Naive thymus-derived CD4-positive, alpha-beta T cell (primary cell): ENCODE measurements at regions of chr14 and their contacts with region 1.

Region 1: GRCh38 chr14:38056270-38056669 is 151.4 kb upstream of the SSTR1 start:
- DNase-seq: no peak
- ATAC-seq: peak; percentile 53
- H3K4me3 ChIP-seq: no peak overlapping the region
- H3K4me3 Mint-ChIP-seq: no peak overlapping the region
- H3K27ac ChIP-seq: no peak overlapping the region
- H3K27ac Mint-ChIP-seq: no peak overlapping the region
- H3K4me1 ChIP-seq: peaks cover 0 to 7% of the 10 kb centered on the region in 2 donors
- H3K4me1 Mint-ChIP-seq: peaks cover 0 to 27% (median 13%) of the 10 kb centered on the region in 7 donors
- H3K27me3 ChIP-seq: no peaks in the 10 kb centered on the region
- H3K27me3 Mint-ChIP-seq: no peaks in the 10 kb centered on the region

Region 2: DNA sequence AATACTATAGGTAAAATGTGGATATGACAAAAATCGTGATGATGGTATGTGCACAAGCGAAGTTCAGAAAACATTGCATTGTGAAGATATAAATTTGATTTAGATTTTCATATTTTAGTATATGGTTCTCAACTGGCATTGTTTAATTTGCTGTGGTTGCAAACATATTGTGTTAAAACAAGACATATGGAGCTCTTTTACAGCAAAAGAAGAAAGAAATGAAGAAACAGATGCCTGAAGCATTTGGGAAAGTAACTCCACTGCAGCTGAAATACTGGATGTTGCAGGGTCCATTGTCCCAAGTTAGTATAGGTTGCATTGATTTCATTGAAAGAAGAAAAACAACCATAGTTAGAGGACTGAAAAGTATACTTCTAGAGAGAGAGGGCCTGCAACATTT is 34.4 kb before region 1 on chr14:
- CTCF ChIA-PET with region 1: no interaction called
- POLR2A ChIA-PET with region 1: no interaction called
- intact Hi-C with region 1: no loop called
- DNase-seq: no peak
- ATAC-seq: no peak
- H3K4me3 ChIP-seq: no peak overlapping the region
- H3K4me3 Mint-ChIP-seq: no peak overlapping the region
- H3K27ac ChIP-seq: no peak overlapping the region
- H3K27ac Mint-ChIP-seq: no peak overlapping the region
- H3K4me1 ChIP-seq: no peaks in the 10 kb centered on the region
- H3K4me1 Mint-ChIP-seq: peaks cover 0 to 4% (median 0%) of the 10 kb centered on the region in 7 donors
- H3K27me3 ChIP-seq: no peaks in the 10 kb centered on the region
- H3K27me3 Mint-ChIP-seq: no peaks in the 10 kb centered on the region

Region 3: DNA sequence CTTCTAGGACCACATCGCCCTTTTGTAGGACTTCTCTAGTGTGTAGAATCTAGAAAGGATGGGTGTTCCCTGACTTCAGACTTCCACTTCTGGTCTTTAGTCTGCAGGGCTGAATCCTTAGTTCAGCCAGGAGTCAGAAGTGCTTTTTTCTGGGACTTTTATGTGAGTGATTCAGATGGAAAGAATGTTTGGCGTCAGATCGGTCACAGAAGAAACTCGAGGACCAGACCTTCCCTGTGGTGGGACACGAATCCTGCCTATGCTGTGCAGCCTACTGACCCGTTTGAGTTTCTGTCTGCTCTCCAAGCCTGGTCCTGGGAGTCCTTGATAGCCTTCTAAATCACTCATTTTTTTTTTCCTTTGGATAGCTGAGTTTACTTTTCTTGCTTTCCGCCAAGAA is 13.9 kb before region 1 on chr14:
- CTCF ChIA-PET with region 1: no interaction called
- POLR2A ChIA-PET with region 1: interaction called, 3 read pairs
- intact Hi-C with region 1: loop called in 1 of 2 experiments (anchors 2 kb)
- DNase-seq: no peak
- ATAC-seq: no peak
- H3K4me3 ChIP-seq: no peak overlapping the region
- H3K4me3 Mint-ChIP-seq: no peak overlapping the region
- H3K27ac ChIP-seq: no peak overlapping the region
- H3K27ac Mint-ChIP-seq: no peak overlapping the region
- H3K4me1 ChIP-seq: peaks cover 0 to 13% of the 10 kb centered on the region in 2 donors
- H3K4me1 Mint-ChIP-seq: peaks cover 0 to 32% (median 7%) of the 10 kb centered on the region in 7 donors
- H3K27me3 ChIP-seq: no peaks in the 10 kb centered on the region
- H3K27me3 Mint-ChIP-seq: no peaks in the 10 kb centered on the region

Region 4: GRCh38 chr14:38197001-38197783 is 140.9 kb after region 1 on chr14:
- CTCF ChIA-PET with region 1: no interaction called
- POLR2A ChIA-PET with region 1: no interaction called
- intact Hi-C with region 1: loop called in 1 of 2 experiments (anchors 1 kb)
- DNase-seq: peak in 5 of 9 donors; percentile 23 to 49 (median 35)
- ATAC-seq: no peak
- H3K4me3 ChIP-seq: no peak overlapping the region
- H3K4me3 Mint-ChIP-seq: no peak overlapping the region
- H3K27ac ChIP-seq: no peak overlapping the region
- H3K27ac Mint-ChIP-seq: peak overlapping the region in 1 of 9 donors; percentile 60
- H3K4me1 ChIP-seq: peaks cover 0 to 4% of the 10 kb centered on the region in 2 donors
- H3K4me1 Mint-ChIP-seq: peaks cover 0 to 8% (median 5%) of the 10 kb centered on the region in 7 donors
- H3K27me3 ChIP-seq: no peaks in the 10 kb centered on the region
- H3K27me3 Mint-ChIP-seq: peaks cover 0 to 2% (median 0%) of the 10 kb centered on the region in 5 donors